ENCODE measurements at regions of chrX and their contacts with region 1.

Region 1: DNA sequence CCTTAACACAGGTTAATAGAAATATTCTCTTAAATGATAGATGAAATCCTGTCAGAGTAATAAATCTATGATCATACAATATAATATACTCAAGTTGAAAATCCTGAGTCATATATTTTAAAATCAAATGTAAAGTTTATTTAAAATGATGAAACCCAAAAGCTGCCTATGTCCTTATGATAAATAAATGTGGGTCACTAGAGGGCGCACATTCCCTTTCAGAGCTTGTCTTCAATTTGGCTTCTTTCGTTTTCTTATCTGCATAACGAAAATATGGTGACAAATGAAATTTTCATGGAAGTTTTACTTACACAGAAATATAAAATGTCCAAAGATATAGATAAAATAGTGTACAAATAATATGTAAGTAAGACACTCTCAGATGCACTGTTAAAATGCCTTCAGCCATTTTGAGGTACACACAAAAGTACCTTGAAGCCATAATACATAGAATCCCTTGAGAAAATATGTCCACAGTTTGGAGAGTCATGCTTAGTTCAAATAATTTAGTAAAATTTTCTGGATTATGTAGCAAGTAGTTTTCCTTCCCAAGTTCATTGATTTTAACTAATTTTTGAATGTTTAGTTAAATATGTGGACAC is 680.4 kb downstream of the DMD start:
- DNase-seq: no peak
- ATAC-seq: no peak
- H3K4me3 ChIP-seq: peak overlapping the region in 4 of 10 donors; percentile 11 to 34 (median 28)
- H3K27ac ChIP-seq: no peak overlapping the region
- H3K4me1 ChIP-seq: peaks cover 0 to 7% (median 0%) of the 10 kb centered on the region in 9 donors
- H3K27me3 ChIP-seq: peaks cover 0 to 10% (median 0%) of the 10 kb centered on the region in 7 donors
- CTCF ChIP-seq: peak in 7 of 9 donors; percentile 43 to 69 (median 51)

Region 2: DNA sequence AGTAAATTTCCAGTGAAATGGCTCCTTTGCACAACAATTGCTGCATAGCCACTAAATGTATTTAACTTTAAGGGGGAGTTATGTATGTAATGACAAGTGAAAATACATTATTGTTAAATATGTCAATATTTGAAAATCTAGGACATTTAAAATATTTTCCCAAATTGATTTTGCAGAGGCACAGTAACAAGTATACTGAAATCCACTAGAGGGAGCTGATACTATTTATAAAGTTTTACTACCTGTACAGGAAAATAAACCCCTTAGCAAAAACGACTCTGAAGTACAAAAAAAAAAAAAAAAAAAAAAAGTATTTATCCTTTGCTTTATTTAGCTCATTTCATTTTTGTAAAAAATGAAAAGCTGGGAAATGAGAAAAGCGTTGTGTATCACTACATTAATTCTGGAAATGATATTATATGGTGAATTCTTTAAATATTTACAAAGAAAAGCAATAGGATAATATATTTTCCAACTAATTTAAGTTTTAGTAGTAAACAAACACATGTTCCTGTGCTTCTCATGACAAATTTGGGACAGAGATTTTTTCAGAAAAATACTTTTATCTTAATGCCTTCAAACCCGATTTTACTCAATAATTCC is 47.3 kb before region 1 on chrX:
- intact Hi-C with region 1: no loop called
- DNase-seq: no peak
- ATAC-seq: no peak
- H3K4me3 ChIP-seq: no peak overlapping the region
- H3K27ac ChIP-seq: no peak overlapping the region
- H3K4me1 ChIP-seq: no peaks in the 10 kb centered on the region
- H3K27me3 ChIP-seq: peaks cover 0 to 3% (median 0%) of the 10 kb centered on the region in 7 donors
- CTCF ChIP-seq: peak in 4 of 9 donors; percentile 11 to 26 (median 22)

Region 3: GRCh38 chrX:32592786-32593185 is 61.9 kb after region 1 on chrX:
- intact Hi-C with region 1: loop called in 1 of 10 experiments (anchors 10 kb)
- DNase-seq: no peak
- ATAC-seq: peak in 6 of 8 donors; percentile 35 to 84 (median 60)
- H3K4me3 ChIP-seq: no peak overlapping the region
- H3K27ac ChIP-seq: no peak overlapping the region
- H3K4me1 ChIP-seq: peaks cover 0 to under 1% (median 0%) of the 10 kb centered on the region in 9 donors
- H3K27me3 ChIP-seq: no peaks in the 10 kb centered on the region
- CTCF ChIP-seq: no peak

Region 4: DNA sequence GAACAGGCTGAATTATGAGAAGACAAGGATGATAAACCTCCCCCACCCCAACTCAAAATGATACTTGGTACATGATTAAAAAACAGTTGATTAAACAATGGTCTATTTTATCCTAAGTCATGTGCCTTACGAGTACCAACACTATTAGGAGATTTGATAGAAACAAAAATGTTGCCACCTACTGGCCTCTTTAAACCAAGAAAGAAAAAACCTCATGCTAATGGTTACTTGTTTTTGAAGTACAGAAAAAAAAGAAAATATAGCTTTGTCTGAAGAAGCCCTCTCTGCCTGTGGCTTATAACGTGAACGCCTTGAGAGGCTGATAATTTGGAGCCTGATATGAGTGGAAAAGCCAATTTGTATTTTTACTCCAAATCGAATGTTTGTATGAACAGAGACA is 142.3 kb after region 1 on chrX:
- intact Hi-C with region 1: loop called in 1 of 10 experiments (anchors 10 kb)
- DNase-seq: no peak
- ATAC-seq: no peak
- H3K4me3 ChIP-seq: no peak overlapping the region
- H3K27ac ChIP-seq: no peak overlapping the region
- H3K4me1 ChIP-seq: peaks cover 0 to 10% (median 0%) of the 10 kb centered on the region in 9 donors
- H3K27me3 ChIP-seq: no peaks in the 10 kb centered on the region
- CTCF ChIP-seq: peak in 1 of 9 donors; percentile 10

Region 5: GRCh38 chrX:33336783-33337182 is 805.9 kb after region 1 on chrX:
- intact Hi-C with region 1: loop called in 3 of 10 experiments (anchors 5 to 10 kb)
- DNase-seq: peak in 1 of 2 donors; percentile 8
- ATAC-seq: peak in 2 of 8 donors; percentile 53 to 60
- H3K4me3 ChIP-seq: peak overlapping the region in 1 of 10 donors; percentile 26
- H3K27ac ChIP-seq: no peak overlapping the region
- H3K4me1 ChIP-seq: no peaks in the 10 kb centered on the region
- H3K27me3 ChIP-seq: no peaks in the 10 kb centered on the region
- CTCF ChIP-seq: peak in 8 of 9 donors; percentile 16 to 58 (median 45)

Measured in heart right ventricle (tissue), 16 donors.